GM23248 (cell line): ENCODE measurements at regions of chr1 and their contacts with region 1.

Region 1: DNA sequence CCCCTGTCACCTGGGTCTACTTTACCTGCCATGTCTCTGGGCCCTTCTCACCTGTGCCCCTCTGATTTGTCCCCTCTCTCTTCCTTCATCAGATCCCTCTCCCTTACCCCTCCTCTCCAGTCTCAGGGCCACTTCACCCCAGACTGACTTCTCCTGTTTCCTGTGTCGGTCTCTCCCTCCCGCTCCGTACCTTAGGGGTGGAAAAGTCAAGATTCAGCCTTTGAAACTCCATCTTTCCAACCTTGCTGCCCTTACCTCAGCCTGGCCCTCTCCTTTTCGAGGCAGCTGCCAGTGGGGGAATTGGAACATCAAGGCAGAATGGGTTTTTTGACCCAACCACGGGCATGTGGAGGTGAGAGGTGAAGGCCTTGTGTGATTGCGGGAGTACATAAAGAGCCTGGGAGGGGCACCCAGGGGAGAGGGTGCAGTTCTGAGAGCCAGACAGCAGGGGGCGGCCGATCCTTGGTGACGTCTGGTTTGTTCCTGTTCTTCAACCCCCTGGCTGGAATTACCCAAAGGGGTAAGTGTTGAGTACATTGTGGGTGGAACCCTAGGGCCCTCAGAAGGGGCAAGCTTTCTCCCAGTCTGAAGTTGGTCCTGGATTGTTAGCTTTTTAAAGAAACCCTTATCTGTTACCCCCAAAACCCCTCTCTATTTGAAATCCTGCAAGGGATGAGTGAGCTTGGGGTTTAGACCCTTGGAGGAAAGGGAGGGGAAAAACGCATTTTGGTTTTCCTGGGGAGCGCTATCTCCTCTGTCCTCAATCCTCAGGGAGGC is 12.3 kb upstream of the DMBX1 start:
- DNase-seq: peak; percentile 73
- H3K4me3 ChIP-seq: no peak overlapping the region
- H3K27ac ChIP-seq: no peak overlapping the region
- H3K4me1 ChIP-seq: no peaks in the 10 kb centered on the region
- H3K27me3 ChIP-seq: peaks cover 7% of the 10 kb centered on the region

Region 2: GRCh38 chr1:46527474-46528296 is 50.3 kb after region 1 on chr1:
- in situ Hi-C with region 1: loop called (anchors 10 kb)
- DNase-seq: peak; percentile 85
- H3K4me3 ChIP-seq: no peak overlapping the region
- H3K27ac ChIP-seq: no peak overlapping the region
- H3K4me1 ChIP-seq: peaks cover 4% of the 10 kb centered on the region
- H3K27me3 ChIP-seq: peaks cover 11% of the 10 kb centered on the region; the same call in 1 of the 2 replicates